Sigmoid colon (tissue), 7 donors: ENCODE measurements at regions of chr9 and their contacts with region 1.

Region 1: GRCh38 chr9:88578121-88579054 is 43.4 kb downstream of the NXNL2 start:
- DNase-seq: peak; percentile 89
- H3K4me3 ChIP-seq: no peak overlapping the region
- H3K27ac ChIP-seq: no peak overlapping the region
- H3K4me1 ChIP-seq: peaks cover 0 to 22% (median 13%) of the 10 kb centered on the region in 4 donors
- H3K27me3 ChIP-seq: no peaks in the 10 kb centered on the region
- CTCF ChIP-seq: peak; percentile 67 to 98 (median 90)
- EP300 ChIP-seq: no peak
- POLR2A ChIP-seq: no peak

Region 2: GRCh38 chr9:87678650-87679515 is 899.5 kb before region 1 on chr9:
- intact Hi-C with region 1: loop called (anchors 10 kb)
- DNase-seq: peak; percentile 81
- H3K4me3 ChIP-seq: no peak overlapping the region
- H3K27ac ChIP-seq: no peak overlapping the region
- H3K4me1 ChIP-seq: peaks cover 0 to 27% (median 15%) of the 10 kb centered on the region in 4 donors
- H3K27me3 ChIP-seq: no peaks in the 10 kb centered on the region
- CTCF ChIP-seq: peak; percentile 52 to 78 (median 70)
- EP300 ChIP-seq: no peak
- POLR2A ChIP-seq: no peak

Region 3: GRCh38 chr9:87950765-87951488 is 627.5 kb before region 1 on chr9:
- intact Hi-C with region 1: loop called (anchors 10 kb)
- DNase-seq: no peak
- H3K4me3 ChIP-seq: no peak overlapping the region
- H3K27ac ChIP-seq: no peak overlapping the region
- H3K4me1 ChIP-seq: no peaks in the 10 kb centered on the region
- H3K27me3 ChIP-seq: no peaks in the 10 kb centered on the region
- CTCF ChIP-seq: peak in 1 of 4 experiments; percentile 36
- EP300 ChIP-seq: no peak
- POLR2A ChIP-seq: no peak

Region 4: DNA sequence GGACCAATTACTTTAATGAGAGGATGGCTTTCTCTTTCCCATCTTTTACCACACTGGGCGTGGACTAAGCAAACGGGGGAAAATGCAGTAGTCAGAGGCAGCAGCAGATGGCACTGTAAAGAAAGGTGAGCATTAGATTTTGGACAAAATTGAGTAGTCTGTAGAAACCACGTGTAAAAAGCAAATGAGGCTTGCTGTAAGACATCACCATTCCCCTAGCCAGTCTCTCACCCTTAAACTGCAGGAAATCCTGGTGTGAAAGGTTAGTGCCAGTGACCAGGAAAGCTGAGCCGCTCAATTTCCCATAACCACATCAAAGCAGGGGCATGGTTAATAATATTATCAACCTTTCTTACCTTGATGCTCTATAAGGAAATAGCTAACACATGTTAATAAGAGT is 471.9 kb before region 1 on chr9:
- intact Hi-C with region 1: loop called (anchors 2 kb)
- DNase-seq: no peak
- H3K4me3 ChIP-seq: no peak overlapping the region
- H3K27ac ChIP-seq: no peak overlapping the region
- H3K4me1 ChIP-seq: no peaks in the 10 kb centered on the region
- H3K27me3 ChIP-seq: no peaks in the 10 kb centered on the region
- CTCF ChIP-seq: peak in 3 of 4 experiments; percentile 59 to 65 (median 62)
- EP300 ChIP-seq: no peak
- POLR2A ChIP-seq: no peak

Region 5: DNA sequence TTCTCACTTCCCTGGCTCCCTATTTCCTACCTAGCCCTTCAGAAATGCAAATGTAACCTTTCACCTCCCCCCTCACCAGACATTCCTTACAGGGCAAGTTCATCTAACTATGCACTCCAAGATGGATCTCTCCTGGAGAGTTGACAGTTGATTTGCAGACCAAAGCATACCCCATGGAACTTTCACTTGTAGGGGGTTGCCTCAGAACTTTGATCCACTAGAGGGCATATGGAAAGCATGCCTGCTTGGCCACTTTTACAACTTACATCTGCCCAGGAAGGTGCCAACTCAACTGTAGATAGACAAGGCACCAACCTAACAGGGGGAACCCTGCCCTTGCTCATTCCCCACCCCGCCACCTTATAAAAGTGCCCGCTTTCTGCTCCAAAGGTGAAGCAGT is 144.4 kb after region 1 on chr9:
- intact Hi-C with region 1: no loop called
- DNase-seq: no peak
- H3K4me3 ChIP-seq: no peak overlapping the region
- H3K27ac ChIP-seq: no peak overlapping the region
- H3K4me1 ChIP-seq: no peaks in the 10 kb centered on the region
- H3K27me3 ChIP-seq: no peaks in the 10 kb centered on the region
- CTCF ChIP-seq: no peak
- EP300 ChIP-seq: no peak
- POLR2A ChIP-seq: no peak

Region 6: GRCh38 chr9:89340332-89340731 is 761.9 kb after region 1 on chr9:
- intact Hi-C with region 1: no loop called
- DNase-seq: no peak
- H3K4me3 ChIP-seq: no peak overlapping the region
- H3K27ac ChIP-seq: no peak overlapping the region
- H3K4me1 ChIP-seq: no peaks in the 10 kb centered on the region
- H3K27me3 ChIP-seq: no peaks in the 10 kb centered on the region
- CTCF ChIP-seq: no peak
- EP300 ChIP-seq: no peak
- POLR2A ChIP-seq: no peak